Activated naive CD4-positive, alpha-beta T cell treated with anti-CD3 and anti-CD28 coated beads, Interleukin-2, amount 10 ng/mL, durations not matched to agents 7 days and 5 days (primary cell): ENCODE measurements at regions of chr12 and their contacts with region 1.

Region 1: DNA sequence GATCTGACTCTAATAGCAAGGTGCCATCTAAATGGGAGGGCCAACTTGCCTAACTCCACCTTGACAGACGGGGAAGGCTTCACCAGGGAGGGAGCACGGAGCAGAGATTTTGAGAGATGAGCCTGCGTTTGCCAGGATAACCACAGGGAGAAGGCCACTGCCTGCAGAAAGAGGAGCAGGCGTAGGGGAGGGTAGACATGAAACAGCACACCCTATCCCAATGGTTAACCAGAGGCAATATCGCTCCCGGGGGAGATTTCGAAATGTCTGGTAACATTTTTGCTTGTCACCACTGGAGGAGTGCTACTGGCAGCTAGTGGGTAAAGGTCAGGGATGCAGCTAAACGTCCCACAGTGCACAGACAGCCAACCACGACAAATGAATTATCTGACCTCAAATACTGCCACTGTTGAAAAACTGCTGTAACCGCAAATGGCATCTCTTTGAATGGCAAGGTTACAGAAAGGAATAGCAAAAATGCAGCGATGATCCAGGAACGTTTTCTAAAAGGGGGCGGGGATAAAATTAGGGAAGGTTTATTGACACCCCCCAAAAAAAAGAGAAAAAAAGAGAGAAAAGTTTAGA is 126.0 kb upstream of the ATF7IP start:
- DNase-seq: peak; percentile 37
- H3K4me3 Mint-ChIP-seq: peak overlapping the region; percentile 53
- H3K27ac Mint-ChIP-seq: peak overlapping the region; percentile 67
- H3K4me1 Mint-ChIP-seq: peaks cover 22% of the 10 kb centered on the region
- H3K27me3 Mint-ChIP-seq: no peaks in the 10 kb centered on the region

Region 2: GRCh38 chr12:14290951-14291350 is 51.5 kb after region 1 on chr12:
- CTCF ChIA-PET with region 1: no interaction called
- DNase-seq: no peak
- H3K4me3 Mint-ChIP-seq: no peak overlapping the region
- H3K27ac Mint-ChIP-seq: no peak overlapping the region
- H3K4me1 Mint-ChIP-seq: no peaks in the 10 kb centered on the region
- H3K27me3 Mint-ChIP-seq: no peaks in the 10 kb centered on the region

Region 3: GRCh38 chr12:14365294-14366208 is 126.1 kb after region 1 on chr12 and contains the start of gene ATF7IP:
- CTCF ChIA-PET with region 1: interaction called, 21 read pairs
- DNase-seq: peak; percentile 97
- H3K4me3 Mint-ChIP-seq: peak within 1 kb of the TSS; percentile 81
- H3K27ac Mint-ChIP-seq: peak within 1 kb of the TSS; percentile 100
- H3K4me1 Mint-ChIP-seq: peaks cover 34% of the 10 kb centered on the region
- H3K27me3 Mint-ChIP-seq: no peaks in the 10 kb centered on the region

Region 4: DNA sequence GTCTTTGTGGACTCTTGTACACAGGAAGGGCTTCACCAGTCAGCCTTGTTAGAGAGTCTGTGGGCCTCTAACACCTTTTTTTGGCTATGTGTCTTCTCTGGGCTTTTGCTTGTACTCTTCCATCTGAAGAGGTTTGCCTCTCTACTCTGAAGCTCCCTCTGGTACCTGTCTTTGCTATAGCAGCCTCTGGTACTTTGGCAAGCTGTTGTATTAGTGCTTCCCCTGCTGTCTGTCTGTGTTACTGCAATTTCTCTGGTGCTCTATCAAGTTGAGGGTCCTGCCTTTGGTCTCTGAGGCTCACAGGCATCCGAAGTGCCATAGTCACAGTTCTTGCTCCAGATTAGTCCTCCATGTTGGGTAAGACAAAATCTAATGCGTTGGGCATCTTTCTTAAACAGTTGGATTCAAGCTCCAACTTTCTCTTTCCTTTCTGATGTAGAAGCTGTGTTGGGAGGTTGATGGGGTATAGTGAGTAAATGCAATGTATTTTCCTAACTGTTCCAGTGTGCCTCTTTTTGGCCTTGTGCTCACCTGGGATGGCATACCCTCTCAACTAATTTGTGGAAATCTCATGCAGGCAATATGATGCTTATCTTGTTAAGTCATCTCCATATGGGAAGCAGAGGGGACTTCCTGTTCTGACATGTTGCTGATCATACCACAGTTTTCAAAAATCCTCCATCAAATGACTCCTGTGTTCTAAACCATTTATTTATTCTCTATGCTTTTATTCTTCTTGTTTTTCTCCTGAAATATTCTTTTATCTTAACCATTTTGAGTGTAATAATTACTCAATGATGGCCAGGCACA is 214.9 kb after region 1 on chr12:
- CTCF ChIA-PET with region 1: interaction called, 49 read pairs
- DNase-seq: peak; percentile 32
- H3K4me3 Mint-ChIP-seq: no peak overlapping the region
- H3K27ac Mint-ChIP-seq: peak overlapping the region; percentile 75
- H3K4me1 Mint-ChIP-seq: peaks cover 49% of the 10 kb centered on the region
- H3K27me3 Mint-ChIP-seq: no peaks in the 10 kb centered on the region

Region 5: DNA sequence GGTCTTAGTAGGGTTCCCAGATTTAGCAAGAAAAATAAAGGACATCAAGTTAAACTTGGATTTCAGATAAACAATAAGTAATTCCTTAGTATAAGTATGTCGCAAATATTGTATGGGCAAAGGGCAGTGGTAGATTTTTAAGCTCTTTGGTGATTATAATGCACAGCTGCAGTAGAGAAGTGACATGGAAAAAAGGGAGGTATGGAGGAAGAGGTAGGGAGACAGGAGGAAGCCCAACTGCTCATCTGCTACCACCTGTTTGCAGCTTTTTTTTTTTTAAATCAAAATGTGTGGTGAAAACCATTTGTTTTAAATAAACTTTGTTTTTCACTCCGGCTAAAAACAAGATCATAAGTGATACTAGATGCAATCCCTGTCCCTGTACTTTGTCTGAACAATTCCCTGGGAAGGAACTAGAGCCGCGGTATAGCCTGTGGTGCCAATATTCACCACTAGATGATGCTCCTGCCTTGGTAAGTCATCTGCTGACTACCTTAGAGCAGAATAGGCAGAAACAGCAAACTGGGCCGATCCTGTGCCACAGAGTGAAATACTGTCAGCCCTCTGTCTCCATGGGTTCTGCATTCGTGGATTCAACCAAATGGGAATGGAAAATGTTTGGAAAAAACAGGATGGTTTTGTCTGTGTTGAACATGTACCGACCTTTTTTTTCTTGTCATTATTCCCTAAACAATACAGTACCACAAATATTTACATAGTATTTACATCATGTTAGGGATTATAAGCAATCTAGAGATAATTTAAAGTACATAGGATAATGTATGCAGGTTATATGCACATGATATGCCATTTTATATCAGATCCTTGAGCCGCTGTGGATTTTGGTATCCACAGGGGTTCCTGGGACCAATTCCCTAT is 390.6 kb after region 1 on chr12:
- CTCF ChIA-PET with region 1: interaction called, 32 read pairs
- DNase-seq: peak; percentile 78
- H3K4me3 Mint-ChIP-seq: no peak overlapping the region
- H3K27ac Mint-ChIP-seq: no peak overlapping the region
- H3K4me1 Mint-ChIP-seq: no peaks in the 10 kb centered on the region
- H3K27me3 Mint-ChIP-seq: peaks cover 8% of the 10 kb centered on the region

Region 6: DNA sequence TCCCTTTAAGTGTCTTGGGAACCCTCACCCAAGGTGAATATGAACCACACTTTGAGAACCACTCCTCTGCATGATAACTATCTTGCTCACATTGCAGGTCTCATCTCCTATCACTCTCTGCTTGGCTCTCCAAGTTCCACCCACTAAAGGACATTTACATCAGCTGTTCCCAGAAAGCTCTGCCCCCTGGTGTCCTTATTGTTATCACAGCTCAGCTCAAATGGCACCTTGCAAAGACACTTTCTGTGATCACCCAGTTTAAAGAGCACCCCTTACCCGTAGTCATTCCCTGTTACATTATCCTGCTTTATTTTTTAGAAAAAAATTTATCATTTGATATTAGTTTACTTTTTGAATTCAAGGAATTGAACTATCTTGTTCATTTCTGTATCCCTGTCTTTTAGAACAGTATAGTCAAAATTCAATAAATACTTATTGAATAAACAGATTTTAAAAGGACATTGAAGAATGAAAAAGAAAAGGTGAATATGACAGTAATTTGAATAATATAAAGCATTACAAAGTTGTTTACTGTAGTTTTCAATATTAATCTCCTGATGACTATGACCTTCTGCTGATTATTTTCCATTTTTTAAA is 477.5 kb after region 1 on chr12:
- CTCF ChIA-PET with region 1: interaction called, 15 read pairs
- DNase-seq: peak; percentile 64
- H3K4me3 Mint-ChIP-seq: no peak overlapping the region
- H3K27ac Mint-ChIP-seq: no peak overlapping the region
- H3K4me1 Mint-ChIP-seq: peaks cover 3% of the 10 kb centered on the region
- H3K27me3 Mint-ChIP-seq: peaks cover 12% of the 10 kb centered on the region